Endothelial cell of umbilical vein (primary cell): ENCODE measurements at regions of chr12 and their contacts with region 1.

Region 1: DNA sequence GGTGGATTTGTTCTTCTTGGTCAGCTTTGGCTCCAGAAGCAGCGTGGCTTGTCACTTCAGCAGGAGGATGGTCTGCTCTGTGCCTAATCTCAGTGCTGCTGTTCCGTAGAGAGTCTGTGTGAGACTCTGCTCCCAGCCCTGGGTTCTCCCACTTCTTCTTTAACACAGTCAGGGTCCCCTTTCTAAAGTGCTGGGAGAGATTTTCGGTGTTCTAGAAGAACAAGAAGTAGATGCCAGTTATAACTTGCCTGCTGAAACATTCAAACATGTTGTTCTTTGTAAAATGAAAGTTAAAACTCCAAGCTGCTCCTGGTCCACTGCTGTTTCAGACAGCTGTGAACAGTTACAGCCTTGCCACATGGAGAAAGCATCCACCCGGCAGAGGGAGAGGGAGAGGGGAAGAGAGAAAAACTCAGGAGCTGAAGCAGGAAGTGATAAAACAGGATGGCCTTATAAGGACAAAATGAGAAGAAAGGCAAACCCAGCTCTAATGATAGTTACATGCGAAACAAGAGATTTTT is 55.2 kb upstream of the CERS5 start:
- DNase-seq: peak; percentile 89
- H3K4me3 ChIP-seq: peak overlapping the region; percentile 50 to 99 (median 96)
- H3K27ac ChIP-seq: peak overlapping the region; percentile 77
- H3K4me1 ChIP-seq: peaks cover 23% of the 10 kb centered on the region
- H3K27me3 ChIP-seq: no peaks in the 10 kb centered on the region
- CTCF ChIP-seq: peak in 1 of 2 donors; percentile 11
- POLR2A ChIP-seq: peak; percentile 80

Region 2: GRCh38 chr12:50187084-50187900 is 35.0 kb before region 1 on chr12:
- CTCF ChIA-PET with region 1: interaction called, 14 read pairs
- POLR2A ChIA-PET with region 1: interaction called, 4 read pairs
- dilution Hi-C with region 1: no loop called
- intact Hi-C with region 1: loop called (anchors 2 kb)
- DNase-seq: no peak
- H3K4me3 ChIP-seq: no peak overlapping the region
- H3K27ac ChIP-seq: peak overlapping the region; percentile 90
- H3K4me1 ChIP-seq: peaks cover 40% of the 10 kb centered on the region
- H3K27me3 ChIP-seq: no peaks in the 10 kb centered on the region
- CTCF ChIP-seq: no peak
- POLR2A ChIP-seq: no peak

Region 3: DNA sequence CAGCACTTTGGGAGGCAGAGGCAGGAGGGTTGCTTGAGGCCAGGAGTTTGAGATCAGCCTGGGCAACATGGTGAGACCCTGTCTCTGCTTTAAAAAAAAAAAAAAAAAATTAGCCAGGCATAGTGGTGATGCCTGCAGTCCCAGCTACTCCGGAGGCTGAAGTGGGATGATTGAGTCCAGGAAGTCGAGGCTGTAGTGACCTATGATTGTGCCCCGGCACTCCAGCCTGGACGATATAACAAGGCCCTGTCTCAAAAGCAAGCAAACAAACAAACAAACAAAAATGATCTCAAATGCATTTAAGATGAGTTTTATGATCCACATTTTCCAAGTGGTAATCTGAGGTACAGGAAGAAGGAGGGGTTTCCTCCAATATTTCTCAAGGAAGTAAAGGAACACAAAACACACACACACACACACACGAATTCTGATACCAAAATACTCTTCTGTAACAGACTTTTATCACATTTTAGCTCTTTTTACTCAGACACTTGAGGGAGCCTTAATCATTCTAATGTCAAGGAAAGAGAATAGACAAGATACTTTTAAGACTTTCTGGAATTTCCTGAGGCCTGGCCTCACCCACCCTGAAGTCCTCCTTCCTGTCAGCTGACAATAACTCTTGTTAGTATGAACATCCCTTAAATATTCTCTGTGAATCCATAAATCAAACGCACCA is 10.8 kb before region 1 on chr12:
- CTCF ChIA-PET with region 1: interaction called, 10 read pairs
- POLR2A ChIA-PET with region 1: interaction called, 3 read pairs
- dilution Hi-C with region 1: no loop called
- intact Hi-C with region 1: no loop called
- DNase-seq: peak; percentile 70
- H3K4me3 ChIP-seq: peak overlapping the region in 1 of 3 experiments; percentile 11
- H3K27ac ChIP-seq: peak overlapping the region; percentile 72
- H3K4me1 ChIP-seq: peaks cover 45% of the 10 kb centered on the region
- H3K27me3 ChIP-seq: no peaks in the 10 kb centered on the region
- CTCF ChIP-seq: no peak
- POLR2A ChIP-seq: no peak

Region 4: DNA sequence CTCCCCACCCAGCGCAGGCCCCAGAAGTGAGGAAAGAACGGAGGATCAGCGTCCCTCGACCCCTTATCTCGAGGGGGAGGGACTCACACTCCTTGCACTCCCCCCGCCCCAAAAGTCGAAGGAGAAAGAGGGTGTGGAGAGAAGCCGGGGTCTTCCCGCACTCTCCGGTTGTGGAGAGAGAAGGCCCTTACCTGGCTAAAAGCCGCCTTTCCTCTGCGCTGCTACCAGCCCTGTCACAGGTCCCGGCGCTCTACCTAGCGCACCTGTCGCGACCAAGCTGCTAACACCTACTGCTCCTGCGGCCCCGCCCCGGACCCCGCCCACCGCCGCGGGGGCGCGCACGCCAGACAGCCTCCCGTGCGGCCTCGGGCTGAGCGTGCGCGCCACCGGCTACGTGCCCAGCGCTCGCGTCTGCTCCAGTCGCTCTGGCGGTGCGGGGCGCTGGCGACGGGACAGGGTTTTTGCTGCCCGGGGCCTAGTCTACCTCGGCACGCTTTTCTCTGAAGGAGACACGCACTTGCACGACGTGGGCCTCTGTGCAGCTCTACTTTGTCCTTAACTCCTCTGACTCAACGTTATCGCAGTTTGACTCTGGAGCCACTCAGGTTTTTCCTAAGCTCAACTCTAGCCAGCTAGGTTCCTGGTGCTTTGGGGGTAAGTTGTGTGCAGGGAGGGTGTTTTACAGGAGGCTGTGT is 61.0 kb after region 1 on chr12 and contains the start of gene LIMA1:
- CTCF ChIA-PET with region 1: interaction called, 27 read pairs
- POLR2A ChIA-PET with region 1: no interaction called
- dilution Hi-C with region 1: no loop called
- intact Hi-C with region 1: loop called (anchors 1 kb)
- DNase-seq: peak; percentile 84
- H3K4me3 ChIP-seq: peak within 1 kb of the TSS; percentile 43 to 76 (median 52)
- H3K27ac ChIP-seq: peak within 1 kb of the TSS; percentile 4
- H3K4me1 ChIP-seq: peaks cover 15% of the 10 kb centered on the region
- H3K27me3 ChIP-seq: no peaks in the 10 kb centered on the region
- CTCF ChIP-seq: peak in 1 of 2 donors; percentile 50
- POLR2A ChIP-seq: peak; percentile 89
- total RNA-seq, gene LIMA1: 81.3 and 87.3 TPM in 2 replicates